Thyroid gland (tissue), 4 donors: ENCODE measurements at regions of chr19 and their contacts with region 1.

Region 1: DNA sequence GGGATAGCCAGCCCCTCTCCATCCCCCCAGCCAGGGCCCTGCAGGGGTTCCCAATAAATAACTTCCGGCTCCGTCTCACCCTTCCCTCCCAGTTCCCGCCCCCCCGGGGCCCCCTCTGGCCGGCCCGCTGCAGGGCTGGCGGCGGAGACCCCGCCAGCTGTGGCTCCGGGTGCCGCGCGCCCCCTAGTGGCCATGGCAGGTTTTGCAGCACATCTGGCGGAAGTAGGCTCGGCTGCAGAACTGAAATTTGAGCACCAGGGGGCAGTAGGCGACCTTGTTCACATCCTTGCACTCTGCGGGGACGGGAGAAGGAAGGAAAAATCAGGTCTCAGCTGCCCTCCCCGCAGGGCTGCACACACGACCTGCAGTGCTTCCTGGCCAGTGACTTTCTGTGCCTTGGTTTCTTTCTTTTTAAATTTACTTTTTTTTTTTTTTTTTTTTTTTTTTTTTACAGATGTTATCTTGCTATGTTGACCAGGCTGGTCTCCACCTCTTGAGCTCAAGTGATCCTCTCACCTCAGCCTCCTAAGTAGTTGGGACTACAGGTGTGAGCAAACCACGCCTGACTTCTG is 3.6 kb upstream of the MYO1F start:
- DNase-seq: peak; percentile 68 to 72
- H3K4me3 ChIP-seq: no peak overlapping the region
- H3K27ac ChIP-seq: no peak overlapping the region
- H3K4me1 ChIP-seq: no peaks in the 10 kb centered on the region
- H3K27me3 ChIP-seq: no peaks in the 10 kb centered on the region
- CTCF ChIP-seq: peak; percentile 86 to 100 (median 98)
- POLR2A ChIP-seq: no peak

Region 2: DNA sequence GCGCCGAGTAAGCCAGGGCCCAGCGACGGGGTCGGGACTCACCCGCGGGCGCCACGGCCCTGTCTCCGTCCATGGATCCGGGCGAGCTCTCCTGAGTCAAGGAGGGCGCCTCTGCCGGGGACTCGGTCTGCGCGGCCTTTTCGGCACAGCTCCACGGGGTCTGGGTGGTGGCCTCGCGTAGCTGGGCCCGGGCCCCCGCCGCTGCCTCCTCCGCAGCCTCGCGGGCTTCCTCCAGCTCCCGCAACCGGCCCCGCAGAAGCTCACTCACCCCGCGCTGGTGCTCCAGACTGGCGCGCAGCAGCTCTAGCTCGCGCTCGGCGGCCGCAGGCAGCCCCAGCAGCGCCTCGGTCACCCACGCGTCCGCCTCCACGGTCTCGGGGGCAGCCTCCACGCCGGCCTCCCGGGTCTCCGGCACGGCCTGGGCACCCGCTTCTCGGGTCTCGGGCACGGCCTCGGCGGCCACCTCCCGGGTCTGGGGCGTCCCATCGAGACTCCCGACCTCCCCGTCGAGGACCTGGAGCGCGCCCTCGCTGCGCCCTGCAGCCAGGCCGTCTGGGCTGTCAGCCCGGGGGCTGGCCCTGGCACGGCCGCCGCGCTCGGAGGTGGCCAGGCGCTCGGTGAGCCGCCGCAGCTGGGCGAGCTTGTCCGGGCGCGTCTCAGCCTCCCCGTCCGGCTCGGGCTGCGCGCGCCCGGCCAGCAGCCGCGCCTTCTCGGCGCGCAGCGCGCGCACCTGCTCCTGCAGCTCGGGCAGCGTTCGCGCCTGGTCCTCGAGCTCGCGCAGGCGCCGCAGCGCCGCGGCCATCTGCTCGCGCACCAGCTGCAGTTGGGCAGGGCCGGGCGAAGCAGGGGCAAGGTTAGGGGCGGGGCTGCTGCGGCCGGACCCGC is 246.1 kb before region 1 on chr19:
- intact Hi-C with region 1: loop called (anchors 10 kb)
- DNase-seq: peak; percentile 59 to 64
- H3K4me3 ChIP-seq: peak overlapping the region in 1 of 3 donors; percentile 21
- H3K27ac ChIP-seq: no peak overlapping the region
- H3K4me1 ChIP-seq: peaks cover 0 to 20% of the 10 kb centered on the region in 2 donors
- H3K27me3 ChIP-seq: no peaks in the 10 kb centered on the region
- CTCF ChIP-seq: no peak
- POLR2A ChIP-seq: no peak

Region 3: GRCh38 chr19:8412783-8413628 is 167.8 kb before region 1 on chr19 and contains the start of gene MARCHF2:
- intact Hi-C with region 1: no loop called
- DNase-seq: peak; percentile 98
- H3K4me3 ChIP-seq: peak within 1 kb of the TSS; percentile 11 to 76 (median 51)
- H3K27ac ChIP-seq: peak within 1 kb of the TSS in 1 of 3 donors; percentile 66
- H3K4me1 ChIP-seq: peaks cover 27 to 39% of the 10 kb centered on the region in 2 donors
- H3K27me3 ChIP-seq: no peaks in the 10 kb centered on the region
- CTCF ChIP-seq: peak; percentile 34 to 85 (median 59)
- POLR2A ChIP-seq: peak; percentile 43 to 75
- total RNA-seq, gene MARCHF2: 168 to 245 (median 215) TPM

Region 4: GRCh38 chr19:8654591-8655339 is 74.0 kb after region 1 on chr19:
- intact Hi-C with region 1: no loop called
- DNase-seq: peak; percentile 32 to 35
- H3K4me3 ChIP-seq: no peak overlapping the region
- H3K27ac ChIP-seq: no peak overlapping the region
- H3K4me1 ChIP-seq: peaks cover 0 to 5% of the 10 kb centered on the region in 2 donors
- H3K27me3 ChIP-seq: no peaks in the 10 kb centered on the region
- CTCF ChIP-seq: peak; percentile 77 to 99 (median 92)
- POLR2A ChIP-seq: no peak